Naive thymus-derived CD4-positive, alpha-beta T cell (primary cell): ENCODE measurements at regions of chr5 and their contacts with region 1.

Region 1: DNA sequence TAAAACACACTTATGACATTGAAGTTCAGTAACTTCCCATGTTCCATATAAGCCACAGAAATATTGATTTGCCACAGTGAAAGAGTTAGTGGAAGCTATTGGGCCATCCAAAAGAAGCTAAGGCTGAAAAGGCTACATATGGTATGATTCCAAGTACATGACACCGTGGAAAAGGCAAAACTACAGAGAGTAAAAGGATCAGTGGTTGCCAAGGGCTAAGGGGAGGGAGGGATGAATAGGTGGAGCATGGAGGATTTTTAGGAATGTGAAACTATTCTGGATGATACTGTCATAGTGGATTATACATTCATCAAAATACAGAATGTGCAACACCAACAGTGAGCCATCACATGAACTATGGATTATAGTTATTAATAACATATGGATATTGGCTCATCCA is 109.7 kb downstream of the F2RL2 start:
- DNase-seq: no peak
- ATAC-seq: no peak
- H3K4me3 ChIP-seq: no peak overlapping the region
- H3K4me3 Mint-ChIP-seq: no peak overlapping the region
- H3K27ac ChIP-seq: no peak overlapping the region
- H3K27ac Mint-ChIP-seq: no peak overlapping the region
- H3K4me1 ChIP-seq: no peaks in the 10 kb centered on the region
- H3K4me1 Mint-ChIP-seq: peaks cover 9 to 41% (median 25%) of the 10 kb centered on the region in 7 donors
- H3K27me3 ChIP-seq: no peaks in the 10 kb centered on the region
- H3K27me3 Mint-ChIP-seq: no peaks in the 10 kb centered on the region

Region 2: DNA sequence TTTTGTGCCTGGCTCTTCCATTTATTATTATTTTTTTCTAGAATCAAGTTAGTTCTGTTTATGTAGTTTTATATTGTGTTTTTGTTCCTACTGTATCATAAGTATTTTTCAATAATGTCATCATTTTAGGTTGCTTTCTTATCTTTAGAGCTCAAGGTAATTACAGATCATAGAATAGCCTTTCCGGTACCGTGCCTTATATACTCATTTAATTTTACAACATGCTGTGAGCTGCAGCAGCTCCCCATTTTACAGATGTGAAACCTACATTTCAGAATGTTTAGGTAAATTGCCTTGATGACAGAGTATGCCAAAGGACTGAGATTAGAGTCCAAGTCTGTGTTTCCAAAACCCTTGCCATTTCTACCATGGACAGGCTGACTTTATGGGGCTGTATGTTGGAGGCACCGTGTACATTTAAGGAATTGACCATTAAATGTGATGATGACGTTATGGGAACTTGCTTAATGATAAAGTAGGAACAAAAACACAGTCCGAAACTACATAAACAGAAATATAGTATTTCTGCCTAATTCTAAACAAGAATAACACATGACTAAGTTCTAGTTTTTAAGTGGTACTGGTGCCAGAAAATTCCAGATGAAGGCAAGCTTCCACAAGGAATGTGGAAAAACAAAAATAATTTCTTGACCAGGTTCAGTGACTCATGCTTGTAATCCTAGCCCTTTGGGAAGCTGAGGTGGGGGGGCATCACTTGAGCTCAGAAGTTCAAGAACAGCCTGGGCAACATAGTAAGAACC is 12.7 kb before region 1 on chr5:
- CTCF ChIA-PET with region 1: interaction called, 5 read pairs
- POLR2A ChIA-PET with region 1: no interaction called
- intact Hi-C with region 1: loop called in 1 of 2 experiments (anchors 2 kb)
- DNase-seq: no peak
- ATAC-seq: no peak
- H3K4me3 ChIP-seq: no peak overlapping the region
- H3K4me3 Mint-ChIP-seq: no peak overlapping the region
- H3K27ac ChIP-seq: no peak overlapping the region
- H3K27ac Mint-ChIP-seq: no peak overlapping the region
- H3K4me1 ChIP-seq: peaks cover 11 to 12% of the 10 kb centered on the region in 2 donors
- H3K4me1 Mint-ChIP-seq: peaks cover 39 to 75% (median 67%) of the 10 kb centered on the region in 7 donors
- H3K27me3 ChIP-seq: no peaks in the 10 kb centered on the region
- H3K27me3 Mint-ChIP-seq: no peaks in the 10 kb centered on the region

Region 3: GRCh38 chr5:76527685-76528161 is 14.2 kb after region 1 on chr5:
- CTCF ChIA-PET with region 1: interaction called, 4 read pairs
- POLR2A ChIA-PET with region 1: no interaction called
- intact Hi-C with region 1: loop called in 1 of 2 experiments (anchors 2 kb)
- DNase-seq: no peak
- ATAC-seq: peak; percentile 54
- H3K4me3 ChIP-seq: no peak overlapping the region
- H3K4me3 Mint-ChIP-seq: peak overlapping the region in 2 of 10 donors; percentile 3 to 42
- H3K27ac ChIP-seq: no peak overlapping the region
- H3K27ac Mint-ChIP-seq: peak overlapping the region in 2 of 9 donors; percentile 26 to 33
- H3K4me1 ChIP-seq: peaks cover 11 to 18% of the 10 kb centered on the region in 2 donors
- H3K4me1 Mint-ChIP-seq: peaks cover 36 to 85% (median 70%) of the 10 kb centered on the region in 7 donors
- H3K27me3 ChIP-seq: no peaks in the 10 kb centered on the region
- H3K27me3 Mint-ChIP-seq: no peaks in the 10 kb centered on the region

Region 4: DNA sequence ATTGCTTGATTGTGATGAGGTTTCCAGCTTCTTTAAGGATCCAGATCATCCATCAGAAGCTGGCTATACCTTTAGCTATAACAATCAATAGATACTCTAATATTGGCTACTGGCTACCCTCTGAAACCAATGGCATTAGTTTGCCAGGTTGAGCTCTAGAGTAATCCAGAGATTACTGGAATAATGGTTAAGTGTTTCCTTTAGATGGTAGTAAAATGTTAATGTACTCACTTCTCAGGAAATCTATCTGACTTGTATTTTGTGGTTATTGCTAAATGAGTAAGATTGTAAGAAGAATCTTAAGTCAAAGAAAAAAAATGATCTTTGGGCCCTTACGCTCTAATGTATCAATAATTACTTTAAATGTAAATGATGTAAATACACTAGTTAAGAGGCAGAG is 1182.6 kb after region 1 on chr5:
- CTCF ChIA-PET with region 1: no interaction called
- POLR2A ChIA-PET with region 1: no interaction called
- intact Hi-C with region 1: no loop called
- DNase-seq: no peak
- ATAC-seq: no peak
- H3K4me3 ChIP-seq: no peak overlapping the region
- H3K4me3 Mint-ChIP-seq: no peak overlapping the region
- H3K27ac ChIP-seq: no peak overlapping the region
- H3K27ac Mint-ChIP-seq: no peak overlapping the region
- H3K4me1 ChIP-seq: no peaks in the 10 kb centered on the region
- H3K4me1 Mint-ChIP-seq: peaks cover 8 to 43% (median 18%) of the 10 kb centered on the region in 7 donors
- H3K27me3 ChIP-seq: no peaks in the 10 kb centered on the region
- H3K27me3 Mint-ChIP-seq: no peaks in the 10 kb centered on the region